Psoas muscle (tissue), 8 donors: ENCODE measurements at regions of chr1 and their contacts with region 1.

Region 1: GRCh38 chr1:220031287-220031686 is 15.0 kb downstream of the EPRS1 start:
- DNase-seq: no peak
- ATAC-seq: no peak
- H3K4me3 ChIP-seq: no peak overlapping the region
- H3K27ac ChIP-seq: no peak overlapping the region
- H3K4me1 ChIP-seq: no peaks in the 10 kb centered on the region
- H3K27me3 ChIP-seq: no peaks in the 10 kb centered on the region
- CTCF ChIP-seq: no peak

Region 2: DNA sequence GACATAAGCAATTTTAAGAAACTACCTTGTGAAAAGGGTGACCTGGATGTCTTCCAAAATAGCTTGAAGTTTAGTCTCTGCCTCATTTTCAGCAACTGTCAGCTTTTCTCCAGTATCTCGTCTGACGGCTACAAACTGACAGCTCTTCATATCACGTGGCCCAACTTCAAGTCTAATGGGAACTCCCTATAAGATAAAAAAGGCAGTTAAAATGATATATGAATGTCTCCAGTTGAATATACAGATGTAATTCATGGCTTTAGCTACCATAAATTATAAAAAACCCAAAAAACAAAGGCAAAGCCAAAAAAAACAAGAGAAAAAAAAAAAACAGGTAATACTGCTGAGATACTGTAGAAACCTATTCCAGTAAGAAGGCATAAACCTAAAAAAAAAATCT is 58.1 kb before region 1 on chr1:
- intact Hi-C with region 1: loop called in 1 of 2 experiments (anchors 10 kb)
- DNase-seq: no peak
- ATAC-seq: no peak
- H3K4me3 ChIP-seq: no peak overlapping the region
- H3K27ac ChIP-seq: no peak overlapping the region
- H3K4me1 ChIP-seq: no peaks in the 10 kb centered on the region
- H3K27me3 ChIP-seq: no peaks in the 10 kb centered on the region
- CTCF ChIP-seq: no peak